CD4-positive, alpha-beta T cell (primary cell): ENCODE measurements at regions of chr1 and their contacts with region 1.

Region 1: DNA sequence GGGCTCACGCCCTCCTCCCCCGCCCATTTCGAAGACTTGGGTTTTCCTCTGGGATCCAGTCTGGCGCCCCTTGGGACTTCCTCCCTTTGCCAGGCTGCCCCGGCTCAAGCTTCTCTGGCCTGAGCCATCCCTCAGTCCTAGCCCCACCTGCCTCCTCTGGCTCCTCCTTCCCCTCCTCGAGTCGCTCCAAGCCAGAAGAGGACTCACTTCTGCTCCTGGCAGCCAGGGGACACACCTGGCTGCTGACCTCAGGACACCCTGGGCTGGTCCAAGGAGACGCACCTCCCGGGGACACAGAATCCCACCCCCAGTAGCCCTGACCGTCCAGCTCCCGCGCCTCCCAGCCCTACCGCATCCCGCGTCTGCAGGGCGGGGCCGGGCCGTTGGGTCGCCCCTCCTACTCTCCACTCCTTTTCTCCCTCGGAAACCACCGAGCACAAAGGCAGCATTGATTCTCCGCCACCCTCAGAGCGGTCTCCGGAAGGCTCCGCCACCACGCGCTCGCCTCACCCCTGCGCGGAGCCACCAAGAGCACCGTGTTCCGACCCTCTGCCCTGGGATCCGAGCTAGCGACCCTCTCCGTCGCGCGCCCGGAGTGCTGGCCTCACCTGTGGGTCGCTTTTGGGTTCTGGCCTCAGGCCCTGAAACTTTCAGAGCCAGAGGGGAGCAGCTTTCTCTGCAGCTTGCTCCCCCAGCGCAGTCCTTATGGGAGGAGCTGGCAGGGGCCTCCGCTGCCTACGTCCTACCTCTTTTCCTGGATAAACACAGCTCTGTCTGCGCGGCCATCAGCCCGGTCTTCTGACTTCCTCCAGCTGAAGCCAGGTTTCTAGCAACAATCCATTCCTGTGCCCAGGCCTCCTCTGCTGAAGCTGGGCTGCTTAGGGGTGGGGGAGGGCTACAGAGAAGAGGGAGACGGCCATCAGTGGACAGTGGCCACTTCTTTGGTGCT is at the start of gene C2CD4D:
- DNase-seq: peak; percentile 50 to 91 (median 59)
- ATAC-seq: peak; percentile 78
- H3K4me3 ChIP-seq: peak within 1 kb of the TSS; percentile 70
- H3K4me3 Mint-ChIP-seq: peak within 1 kb of the TSS; percentile 85
- H3K27ac ChIP-seq: peak within 1 kb of the TSS; percentile 54 to 90
- H3K27ac Mint-ChIP-seq: peak within 1 kb of the TSS; percentile 86
- H3K4me1 ChIP-seq: peaks cover 55% of the 10 kb centered on the region
- H3K4me1 Mint-ChIP-seq: peaks cover 62% of the 10 kb centered on the region
- H3K27me3 ChIP-seq: no peaks in the 10 kb centered on the region
- H3K27me3 Mint-ChIP-seq: no peaks in the 10 kb centered on the region
- CTCF ChIP-seq: no peak
- total RNA-seq, gene C2CD4D: 0.75 to 0.88 TPM

Region 2: GRCh38 chr1:151443846-151444782 is 395.6 kb before region 1 on chr1:
- CTCF ChIA-PET with region 1: interaction called, 6 read pairs
- POLR2A ChIA-PET with region 1: no interaction called
- intact Hi-C with region 1: loop called (anchors 2 kb)
- DNase-seq: peak; percentile 40 to 87 (median 60)
- ATAC-seq: peak; percentile 99
- H3K4me3 ChIP-seq: no peak overlapping the region
- H3K4me3 Mint-ChIP-seq: no peak overlapping the region
- H3K27ac ChIP-seq: no peak overlapping the region
- H3K27ac Mint-ChIP-seq: peak overlapping the region; percentile 14
- H3K4me1 ChIP-seq: peaks cover 11% of the 10 kb centered on the region
- H3K4me1 Mint-ChIP-seq: peaks cover 55% of the 10 kb centered on the region
- H3K27me3 ChIP-seq: no peaks in the 10 kb centered on the region
- H3K27me3 Mint-ChIP-seq: no peaks in the 10 kb centered on the region
- CTCF ChIP-seq: peak; percentile 85

Region 3: GRCh38 chr1:151594143-151594625 is 245.5 kb before region 1 on chr1:
- CTCF ChIA-PET with region 1: interaction called, 6 read pairs
- POLR2A ChIA-PET with region 1: no interaction called
- intact Hi-C with region 1: loop called (anchors 1 to 2 kb)
- DNase-seq: peak; percentile 80 to 92 (median 86)
- ATAC-seq: peak; percentile 100
- H3K4me3 ChIP-seq: peak overlapping the region; percentile 14
- H3K4me3 Mint-ChIP-seq: peak overlapping the region; percentile 49
- H3K27ac ChIP-seq: no peak overlapping the region
- H3K27ac Mint-ChIP-seq: no peak overlapping the region
- H3K4me1 ChIP-seq: peaks cover 11% of the 10 kb centered on the region
- H3K4me1 Mint-ChIP-seq: peaks cover 10% of the 10 kb centered on the region
- H3K27me3 ChIP-seq: peaks cover 0 to 6% of the 10 kb centered on the region in 2 experiments
- H3K27me3 Mint-ChIP-seq: peaks cover 4% of the 10 kb centered on the region
- CTCF ChIP-seq: peak; percentile 95

Region 4: GRCh38 chr1:151762941-151763921 is 76.5 kb before region 1 on chr1 and contains the start of gene MRPL9:
- CTCF ChIA-PET with region 1: no interaction called
- POLR2A ChIA-PET with region 1: interaction called, 7 read pairs
- intact Hi-C with region 1: loop called in 1 of 2 experiments (anchors 2 kb)
- DNase-seq: peak; percentile 71 to 89 (median 83)
- ATAC-seq: peak; percentile 99
- H3K4me3 ChIP-seq: peak within 1 kb of the TSS; percentile 94
- H3K4me3 Mint-ChIP-seq: peak within 1 kb of the TSS; percentile 94
- H3K27ac ChIP-seq: peak within 1 kb of the TSS; percentile 75 to 86
- H3K27ac Mint-ChIP-seq: peak within 1 kb of the TSS; percentile 98
- H3K4me1 ChIP-seq: peaks cover 14% of the 10 kb centered on the region
- H3K4me1 Mint-ChIP-seq: peaks cover 29% of the 10 kb centered on the region
- H3K27me3 ChIP-seq: no peaks in the 10 kb centered on the region
- H3K27me3 Mint-ChIP-seq: no peaks in the 10 kb centered on the region
- CTCF ChIP-seq: no peak
- total RNA-seq, gene MRPL9: 152 to 164 TPM

Region 5: GRCh38 chr1:151898513-151898991 is 58.8 kb after region 1 on chr1:
- CTCF ChIA-PET with region 1: interaction called, 3 read pairs
- POLR2A ChIA-PET with region 1: interaction called, 12 read pairs
- intact Hi-C with region 1: no loop called
- DNase-seq: peak; percentile 48 to 86 (median 68)
- ATAC-seq: peak; percentile 91
- H3K4me3 ChIP-seq: peak overlapping the region; percentile 39
- H3K4me3 Mint-ChIP-seq: peak overlapping the region; percentile 83
- H3K27ac ChIP-seq: peak overlapping the region; percentile 74 to 81
- H3K27ac Mint-ChIP-seq: peak overlapping the region; percentile 96
- H3K4me1 ChIP-seq: peaks cover 64% of the 10 kb centered on the region
- H3K4me1 Mint-ChIP-seq: peaks cover 79% of the 10 kb centered on the region
- H3K27me3 ChIP-seq: no peaks in the 10 kb centered on the region
- H3K27me3 Mint-ChIP-seq: no peaks in the 10 kb centered on the region
- CTCF ChIP-seq: no peak